Caco-2 (cell line): ENCODE measurements at regions of chr5 and their contacts with region 1.

Region 1: DNA sequence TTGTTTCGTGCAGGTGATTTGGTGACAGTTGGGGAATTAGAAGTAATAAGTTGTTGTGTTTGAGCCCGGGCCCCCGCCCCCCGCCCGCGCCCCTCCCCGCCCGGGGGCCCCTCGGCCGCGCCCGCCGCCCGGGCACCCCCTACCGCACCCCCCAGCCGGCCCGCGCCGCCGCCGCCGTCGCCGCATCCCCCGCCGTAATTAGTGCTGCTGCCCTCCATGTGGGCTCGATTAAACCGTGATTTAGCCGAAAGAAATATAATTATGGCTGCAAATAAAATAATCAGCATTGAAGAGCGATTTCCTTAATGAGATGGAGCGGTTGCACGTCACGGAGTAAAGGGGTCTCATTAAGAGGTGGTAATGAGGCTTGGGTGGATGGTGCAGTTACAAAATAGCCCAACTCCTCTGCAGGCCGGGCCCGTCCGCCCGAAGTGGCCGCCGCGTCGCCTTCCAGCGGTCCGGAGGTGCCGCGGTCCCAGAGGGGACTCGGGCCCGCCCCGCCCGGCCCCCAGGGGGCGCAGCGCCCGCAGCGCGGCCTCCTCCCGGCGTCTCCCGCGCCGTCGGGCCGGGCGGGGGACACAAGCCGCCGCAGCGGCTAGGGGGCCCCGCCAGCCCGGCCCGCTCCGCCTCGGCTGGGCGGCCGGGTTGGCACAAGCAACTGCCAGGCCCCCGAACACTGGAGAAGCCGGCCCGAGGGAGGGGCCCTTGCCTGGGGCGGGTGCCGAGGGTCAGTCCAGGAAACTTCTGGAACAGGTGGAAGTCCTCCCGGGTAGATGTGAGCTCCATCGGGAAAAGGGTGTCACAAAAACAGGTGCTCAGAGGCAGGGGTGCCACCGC is 6.9 kb upstream of the OTP start:
- DNase-seq: peak in 1 of 2 experiments; percentile 87
- H3K4me3 ChIP-seq: peak overlapping the region; percentile 43
- H3K4me3 Mint-ChIP-seq: peak overlapping the region; percentile 64
- H3K27ac Mint-ChIP-seq: no peak overlapping the region
- H3K4me1 ChIP-seq: peaks cover 10% of the 10 kb centered on the region; the same call in 1 of the 2 replicates
- H3K4me1 Mint-ChIP-seq: peaks cover 13% of the 10 kb centered on the region
- H3K27me3 ChIP-seq: no peaks in the 10 kb centered on the region; the same call in 1 of the 2 replicates
- H3K27me3 Mint-ChIP-seq: peaks cover 46% of the 10 kb centered on the region
- CTCF ChIP-seq: peak; percentile 34 to 53

Region 2: GRCh38 chr5:77697692-77698091 is 52.3 kb after region 1 on chr5:
- CTCF ChIA-PET with region 1: interaction called, 11 read pairs
- POLR2A ChIA-PET with region 1: no interaction called
- intact Hi-C with region 1: no loop called
- DNase-seq: no peak
- H3K4me3 ChIP-seq: no peak overlapping the region
- H3K4me3 Mint-ChIP-seq: no peak overlapping the region
- H3K27ac Mint-ChIP-seq: no peak overlapping the region
- H3K4me1 ChIP-seq: no peaks in the 10 kb centered on the region
- H3K4me1 Mint-ChIP-seq: no peaks in the 10 kb centered on the region
- H3K27me3 ChIP-seq: no peaks in the 10 kb centered on the region
- H3K27me3 Mint-ChIP-seq: no peaks in the 10 kb centered on the region
- CTCF ChIP-seq: no peak